ENCODE measurements at regions of chr5 and their contacts with region 1.

Region 1: GRCh38 chr5:139341650-139342422 is at the start of gene PAIP2:
- DNase-seq: peak; percentile 97 to 99 (median 99)
- ATAC-seq: peak; percentile 95 to 99 (median 98)
- H3K4me3 ChIP-seq: peak within 1 kb of the TSS; percentile 54 to 98 (median 76)
- H3K27ac ChIP-seq: peak within 1 kb of the TSS; percentile 91 to 99 (median 96)
- H3K4me1 ChIP-seq: peaks cover 0 to 39% (median 26%) of the 10 kb centered on the region in 12 donors
- H3K27me3 ChIP-seq: no peaks in the 10 kb centered on the region
- CTCF ChIP-seq: peak; percentile 59 to 91 (median 76)
- POLR2A ChIP-seq: peak; percentile 74 to 91
- total RNA-seq, gene PAIP2: 111 to 154 (median 132) TPM

Region 2: GRCh38 chr5:139293504-139294373 is 48.1 kb before region 1 on chr5 and contains the start of gene MATR3:
- intact Hi-C with region 1: loop called in 8 of 10 experiments (anchors 2 to 10 kb)
- DNase-seq: peak; percentile 97
- ATAC-seq: peak; percentile 95 to 97 (median 96)
- H3K4me3 ChIP-seq: peak within 1 kb of the TSS; percentile 64 to 98 (median 88)
- H3K27ac ChIP-seq: peak within 1 kb of the TSS; percentile 93 to 100 (median 99)
- H3K4me1 ChIP-seq: peaks cover 8 to 46% (median 38%) of the 10 kb centered on the region in 12 donors
- H3K27me3 ChIP-seq: no peaks in the 10 kb centered on the region
- CTCF ChIP-seq: no peak
- POLR2A ChIP-seq: peak; percentile 42 to 90
- total RNA-seq, gene MATR3: 133 to 208 (median 139) TPM

Region 3: GRCh38 chr5:139306197-139306596 is 35.6 kb before region 1 on chr5:
- intact Hi-C with region 1: loop called in 1 of 10 experiments (anchors 5 kb)
- DNase-seq: no peak
- ATAC-seq: no peak
- H3K4me3 ChIP-seq: no peak overlapping the region
- H3K27ac ChIP-seq: no peak overlapping the region
- H3K4me1 ChIP-seq: peaks cover 12 to 100% (median 95%) of the 10 kb centered on the region in 12 donors
- H3K27me3 ChIP-seq: no peaks in the 10 kb centered on the region
- CTCF ChIP-seq: no peak
- POLR2A ChIP-seq: no peak

Region 4: GRCh38 chr5:139392678-139393496 is 51.1 kb after region 1 on chr5:
- intact Hi-C with region 1: loop called in 5 of 10 experiments (anchors 5 kb)
- DNase-seq: peak in 4 of 5 donors; percentile 57 to 86 (median 66)
- ATAC-seq: peak in 3 of 4 donors; percentile 8 to 27 (median 19)
- H3K4me3 ChIP-seq: peak overlapping the region; percentile 65 to 82 (median 69)
- H3K27ac ChIP-seq: peak overlapping the region in 10 of 12 donors; percentile 84 to 97 (median 92)
- H3K4me1 ChIP-seq: peaks cover 5 to 90% (median 61%) of the 10 kb centered on the region in 12 donors
- H3K27me3 ChIP-seq: peaks cover 0 to 28% (median 0%) of the 10 kb centered on the region in 9 donors
- CTCF ChIP-seq: peak in 11 of 12 donors; percentile 23 to 56 (median 39)
- POLR2A ChIP-seq: no peak

Region 5: DNA sequence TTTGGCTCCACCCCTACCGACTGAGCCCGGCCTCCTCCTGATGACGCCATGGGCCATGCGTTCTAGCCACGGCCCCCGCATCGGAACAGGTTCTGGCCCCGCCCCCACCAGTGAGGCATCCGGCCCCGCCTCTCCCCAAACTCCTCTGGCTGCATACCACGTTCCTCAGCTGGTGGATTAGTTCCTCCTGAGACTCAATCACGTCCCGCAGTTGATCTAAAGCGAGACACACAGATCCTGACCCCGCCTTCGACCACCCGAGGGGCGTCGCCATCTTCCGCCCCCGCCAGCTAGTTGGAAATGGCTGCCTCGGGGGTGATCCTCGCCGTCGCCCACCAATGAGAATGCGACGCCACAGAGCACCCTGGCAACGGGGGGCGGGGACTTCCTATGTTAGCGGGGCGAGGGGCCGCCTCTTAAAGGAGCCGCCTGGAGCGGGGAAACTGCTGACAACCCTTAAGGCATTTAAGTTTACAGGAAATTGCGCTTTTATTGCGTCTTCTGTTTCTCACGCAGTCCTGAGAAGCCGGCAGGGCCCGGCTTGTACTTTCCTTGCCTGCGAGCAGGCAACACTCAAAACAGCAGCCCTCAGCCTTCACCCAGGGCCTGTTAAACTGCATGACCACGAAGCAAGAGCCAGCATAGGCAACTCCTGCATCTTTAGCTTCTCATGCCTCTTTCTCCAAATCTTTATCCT is 62.1 kb after region 1 on chr5 and contains the start of gene SPATA24:
- intact Hi-C with region 1: loop called in 1 of 10 experiments (anchors 5 kb)
- DNase-seq: peak; percentile 98 to 99 (median 98)
- ATAC-seq: peak; percentile 96 to 98 (median 97)
- H3K4me3 ChIP-seq: peak within 1 kb of the TSS; percentile 6 to 66 (median 57)
- H3K27ac ChIP-seq: peak within 1 kb of the TSS; percentile 81 to 96 (median 89)
- H3K4me1 ChIP-seq: peaks cover 0 to 28% (median 15%) of the 10 kb centered on the region in 12 donors
- H3K27me3 ChIP-seq: no peaks in the 10 kb centered on the region
- CTCF ChIP-seq: no peak
- POLR2A ChIP-seq: peak in 1 of 2 donors; percentile 33
- total RNA-seq, gene SPATA24: 10.7 to 25.9 (median 16.0) TPM

Region 6: GRCh38 chr5:139524932-139525585 is 183.2 kb after region 1 on chr5:
- intact Hi-C with region 1: no loop called
- DNase-seq: no peak
- ATAC-seq: no peak
- H3K4me3 ChIP-seq: no peak overlapping the region
- H3K27ac ChIP-seq: no peak overlapping the region
- H3K4me1 ChIP-seq: no peaks in the 10 kb centered on the region
- H3K27me3 ChIP-seq: no peaks in the 10 kb centered on the region
- CTCF ChIP-seq: no peak
- POLR2A ChIP-seq: no peak

Region 7: GRCh38 chr5:139711067-139711905 is 369.4 kb after region 1 on chr5:
- intact Hi-C with region 1: no loop called
- DNase-seq: peak in 3 of 5 donors; percentile 47 to 56 (median 51)
- ATAC-seq: peak in 2 of 4 donors; percentile 16 to 24
- H3K4me3 ChIP-seq: peak overlapping the region; percentile 33 to 65 (median 58)
- H3K27ac ChIP-seq: peak overlapping the region in 9 of 12 donors; percentile 24 to 88 (median 77)
- H3K4me1 ChIP-seq: peaks cover 14 to 37% (median 33%) of the 10 kb centered on the region in 12 donors
- H3K27me3 ChIP-seq: peaks cover 0 to 26% (median 0%) of the 10 kb centered on the region in 9 donors
- CTCF ChIP-seq: peak in 3 of 12 donors; percentile 4 to 12 (median 6)
- POLR2A ChIP-seq: no peak

Region 8: DNA sequence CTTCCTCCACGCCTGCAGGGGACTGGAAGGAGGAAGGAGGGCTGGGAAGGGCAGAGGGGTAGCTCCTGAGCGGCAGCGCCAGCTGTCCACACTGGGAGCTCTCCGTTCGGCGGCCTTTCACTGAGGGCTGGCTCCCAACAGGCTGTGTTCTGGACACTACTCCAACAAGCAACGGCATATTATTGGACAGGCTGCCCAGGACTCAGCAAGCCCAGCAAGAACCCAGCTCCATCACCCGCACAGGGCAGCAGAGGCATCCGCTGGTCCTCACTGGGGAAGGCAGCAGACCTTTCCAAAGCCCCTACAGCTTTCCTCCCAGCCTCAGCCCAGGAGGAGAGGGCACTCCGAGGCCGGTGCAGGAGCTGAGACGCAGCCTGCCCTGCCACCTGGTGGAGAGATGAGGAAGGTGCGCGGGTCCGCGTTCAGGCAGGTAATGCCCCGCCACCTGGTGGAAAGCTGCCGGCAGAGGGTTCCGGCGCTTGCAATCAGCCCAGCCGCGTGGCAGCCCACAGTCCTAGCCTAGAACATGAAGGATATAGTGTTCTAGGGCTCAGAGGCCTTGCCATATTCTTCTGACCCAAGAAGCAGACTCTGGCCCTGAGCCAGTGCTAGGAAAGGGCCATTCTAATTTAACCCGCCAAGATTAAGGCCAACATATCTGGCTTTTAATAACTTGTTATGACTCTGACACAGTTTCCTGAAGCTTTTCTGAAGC is 626.9 kb after region 1 on chr5:
- intact Hi-C with region 1: no loop called
- DNase-seq: peak; percentile 83 to 91 (median 84)
- ATAC-seq: peak; percentile 82 to 98 (median 94)
- H3K4me3 ChIP-seq: peak overlapping the region in 1 of 12 donors; percentile 11
- H3K27ac ChIP-seq: peak overlapping the region in 3 of 12 donors; percentile 16 to 37 (median 20)
- H3K4me1 ChIP-seq: peaks cover 11 to 36% (median 19%) of the 10 kb centered on the region in 12 donors
- H3K27me3 ChIP-seq: peaks cover 0 to 5% (median 0%) of the 10 kb centered on the region in 9 donors
- CTCF ChIP-seq: peak; percentile 98 to 100 (median 99)
- POLR2A ChIP-seq: no peak